ENCODE measurements at regions of chr6 and their contacts with region 1.

Region 1: GRCh38 chr6:89610149-89610642 is 28.4 kb downstream of the LYRM2 start:
- DNase-seq: peak; percentile 69

Region 2: DNA sequence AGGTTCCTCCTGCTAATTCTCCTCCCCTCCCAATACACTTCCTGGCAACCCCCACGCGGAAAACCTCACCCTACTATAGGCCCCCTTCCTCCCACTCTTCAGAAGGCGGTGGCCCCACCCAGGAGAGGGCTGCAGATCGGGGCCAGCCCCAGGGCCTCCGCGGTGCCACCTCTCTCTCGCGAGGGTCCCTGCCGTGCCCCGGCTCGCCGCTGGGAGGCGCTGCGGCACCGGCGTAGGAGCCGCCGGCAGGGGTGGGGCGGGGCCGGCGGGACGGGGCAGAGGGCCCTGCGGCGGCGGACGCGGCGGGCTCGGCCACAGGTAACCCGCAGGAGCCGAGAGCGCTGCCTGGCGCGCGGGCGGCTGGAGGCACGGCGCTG is 177.3 kb before region 1 on chr6 and contains the start of gene ANKRD6:
- CTCF ChIA-PET with region 1: interaction called, 38 read pairs
- POLR2A ChIA-PET with region 1: no interaction called
- DNase-seq: peak; percentile 89

Region 3: DNA sequence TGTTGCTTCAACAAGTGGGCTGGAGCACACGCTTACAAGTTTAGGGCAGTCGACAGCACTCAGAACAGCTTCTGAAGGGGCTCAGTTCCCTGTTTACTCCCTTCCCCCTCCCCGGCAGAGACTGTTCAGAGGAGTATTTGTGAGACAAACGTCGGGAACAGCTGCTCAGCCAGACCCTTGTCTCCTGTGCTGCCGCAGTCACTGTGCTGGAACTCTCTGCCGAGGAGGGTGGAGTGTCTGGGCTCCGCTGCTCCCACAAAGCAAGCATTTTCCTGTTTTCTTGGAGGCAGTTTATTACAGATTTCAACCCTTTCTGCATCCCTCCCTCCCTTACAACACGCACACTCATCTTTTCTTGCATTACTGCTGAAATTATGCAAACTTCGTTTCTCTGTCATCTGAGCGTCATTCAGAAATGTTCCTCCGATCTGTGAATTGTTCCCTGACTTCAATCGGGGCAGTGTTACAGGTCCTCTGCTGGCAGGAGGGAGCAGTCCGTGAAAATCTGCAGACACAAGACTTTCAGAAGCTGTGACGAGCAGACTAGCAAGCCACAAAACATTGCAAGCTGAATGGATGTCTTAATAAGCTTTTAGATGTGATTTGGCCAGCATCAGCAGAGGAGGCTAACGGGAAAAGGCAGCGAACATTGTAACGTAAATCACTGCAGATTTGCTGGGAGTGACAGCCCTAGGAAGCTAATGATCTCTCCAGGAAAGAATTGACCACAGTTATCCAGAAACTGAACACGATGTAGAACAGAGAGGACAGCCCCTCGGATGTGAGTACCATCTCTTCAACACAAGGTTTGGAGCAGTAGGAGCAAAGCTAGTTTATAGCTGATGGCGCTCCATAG is 47.9 kb before region 1 on chr6:
- CTCF ChIA-PET with region 1: no interaction called
- POLR2A ChIA-PET with region 1: no interaction called
- DNase-seq: no peak

Region 4: DNA sequence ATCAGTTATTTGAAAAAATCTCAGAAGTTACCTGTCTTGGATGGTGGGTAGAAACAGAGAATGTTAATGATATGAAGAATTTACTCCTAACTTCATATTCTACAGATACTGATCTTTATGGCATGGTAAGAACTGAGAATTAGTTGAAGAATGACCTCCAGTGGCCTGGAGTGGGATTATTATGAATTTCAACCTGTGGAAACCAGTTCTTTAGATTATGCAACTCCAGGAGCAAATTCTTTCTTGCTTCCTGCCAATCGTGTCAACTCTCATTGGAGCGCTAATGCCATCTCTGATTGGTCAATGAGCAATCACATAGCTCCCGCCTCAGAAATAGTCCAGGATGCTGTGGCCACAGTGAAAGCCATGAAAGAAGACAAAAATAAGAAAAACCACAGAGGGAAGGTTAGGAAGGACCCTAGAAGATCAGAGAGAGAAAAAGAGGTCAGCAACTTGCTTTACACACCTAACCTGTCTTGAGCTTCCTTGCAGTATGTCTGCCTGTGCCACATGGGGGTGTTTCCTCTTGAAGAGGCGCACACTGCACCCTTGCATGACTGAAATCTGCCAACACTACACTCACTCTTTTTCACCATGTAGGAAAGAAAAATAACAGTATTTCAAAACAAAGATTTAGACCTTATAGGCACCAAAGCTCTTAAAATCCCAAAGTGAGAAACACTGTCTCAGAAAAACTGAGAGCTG is 12.1 kb before region 1 on chr6:
- CTCF ChIA-PET with region 1: interaction called, 13 read pairs
- POLR2A ChIA-PET with region 1: no interaction called
- DNase-seq: peak; percentile 28

Region 5: DNA sequence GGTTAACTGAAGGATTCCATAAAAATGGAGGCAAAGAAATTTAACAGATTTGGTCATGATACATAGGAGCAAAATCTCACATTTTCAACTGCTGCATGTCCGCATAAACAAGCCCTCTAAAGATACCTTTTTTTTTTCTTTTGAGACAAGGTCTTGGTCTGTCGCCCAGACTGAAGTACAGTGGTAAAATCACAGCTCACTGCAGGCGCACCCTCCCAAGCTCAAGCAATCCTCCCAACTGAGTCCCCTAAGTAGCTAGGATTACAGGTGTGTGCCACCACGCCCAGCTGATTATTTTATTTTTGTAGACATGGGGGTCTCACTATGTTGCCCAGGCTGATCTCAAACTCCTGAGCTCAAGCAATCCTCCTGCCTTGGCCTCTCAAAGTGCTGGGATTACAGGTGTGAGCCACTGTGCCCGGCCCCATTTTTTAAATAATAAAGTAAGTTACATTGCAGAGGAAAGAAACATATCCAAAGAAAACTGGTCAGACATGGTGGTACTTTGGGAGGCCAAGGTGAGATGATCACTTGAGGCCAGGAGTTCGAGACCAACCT is 195.7 kb after region 1 on chr6:
- CTCF ChIA-PET with region 1: no interaction called
- POLR2A ChIA-PET with region 1: no interaction called
- DNase-seq: no peak

Region 6: GRCh38 chr6:89829591-89830385 is 219.6 kb after region 1 on chr6 and contains the start of gene CASP8AP2:
- CTCF ChIA-PET with region 1: no interaction called
- POLR2A ChIA-PET with region 1: no interaction called
- DNase-seq: peak; percentile 94